ENCODE measurements at regions of chr6 and their contacts with region 1.

Region 1: DNA sequence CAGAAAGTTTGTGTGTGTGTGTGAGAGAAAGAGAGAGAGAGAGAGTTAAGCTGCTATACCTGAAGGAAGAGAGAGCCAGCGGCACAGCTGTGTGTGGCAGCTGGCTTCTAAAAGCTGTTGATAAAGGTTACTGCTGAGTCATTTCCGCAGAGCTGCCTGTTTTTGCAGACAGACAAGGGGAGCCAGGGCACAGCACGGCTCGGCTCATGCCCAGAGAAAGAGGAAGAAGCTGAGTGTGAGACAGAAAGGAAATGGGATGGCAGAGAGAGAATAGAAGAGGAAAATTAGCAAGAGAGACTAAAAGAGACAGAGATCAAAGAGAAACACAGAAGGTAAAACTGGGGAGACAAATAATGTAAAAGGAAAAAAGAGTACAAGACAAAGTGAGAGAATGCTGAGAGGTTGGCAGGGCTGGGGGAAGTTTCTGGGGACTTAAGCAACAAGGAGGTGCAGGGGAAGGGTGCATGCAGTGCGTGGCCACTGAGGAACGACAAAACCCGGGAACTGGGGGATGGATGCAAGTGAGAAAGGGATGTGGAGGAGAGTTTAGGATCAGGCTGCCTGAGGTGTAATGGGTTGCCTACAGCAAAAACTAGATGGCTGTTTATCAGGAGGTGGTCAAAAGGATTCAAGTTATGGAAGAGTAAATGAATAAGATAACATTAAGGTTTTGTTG is 22.7 kb downstream of the HLA-A start:
- DNase-seq: peak; percentile 88
- H3K4me3 ChIP-seq: peak overlapping the region in 3 of 4 donors; percentile 31 to 54 (median 36)
- H3K27ac ChIP-seq: peak overlapping the region; percentile 88 to 94 (median 92)
- H3K4me1 ChIP-seq: peaks cover 18 to 46% (median 33%) of the 10 kb centered on the region in 4 donors
- H3K27me3 ChIP-seq: no peaks in the 10 kb centered on the region
- CTCF ChIP-seq: no peak
- EP300 ChIP-seq: no peak
- POLR2A ChIP-seq: peak; percentile 85

Region 2: DNA sequence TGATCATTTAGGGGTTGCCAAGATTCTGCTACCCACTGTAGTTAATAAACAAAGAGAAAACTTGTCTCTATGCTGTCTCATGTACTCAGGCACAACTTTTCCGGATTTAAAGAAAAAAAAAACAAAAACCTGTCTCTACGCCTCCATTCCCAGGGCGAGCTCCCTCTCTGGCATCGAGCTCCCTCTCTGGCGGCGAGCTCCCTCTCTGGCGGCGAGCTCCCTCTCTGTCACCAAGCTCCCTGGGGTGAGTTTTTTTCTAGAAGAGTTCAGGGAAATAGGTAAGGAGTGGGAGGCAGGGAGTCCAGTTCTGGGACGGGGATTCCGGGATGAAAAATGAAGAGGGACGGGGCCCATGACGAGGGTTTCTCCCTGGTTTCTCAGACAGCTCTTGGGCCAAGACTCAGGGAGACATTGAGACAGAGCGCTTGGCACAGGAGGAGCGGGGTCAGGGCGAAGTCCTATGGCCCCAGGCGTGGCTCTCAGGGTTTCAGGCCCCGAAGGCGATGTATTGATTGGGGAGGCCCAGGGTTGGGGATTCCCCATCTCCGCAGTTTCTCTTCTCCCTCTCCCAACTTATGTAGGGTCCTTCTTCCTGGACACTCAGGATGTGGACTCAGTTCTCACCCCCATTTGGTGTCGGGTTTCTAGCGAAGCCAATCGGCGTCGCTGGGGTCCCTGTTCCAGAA is 39.2 kb before region 1 on chr6:
- in situ Hi-C with region 1: no loop called
- intact Hi-C with region 1: loop called (anchors 2 kb)
- DNase-seq: no peak
- H3K4me3 ChIP-seq: peak overlapping the region in 3 of 4 donors; percentile 59 to 71 (median 66)
- H3K27ac ChIP-seq: peak overlapping the region in 3 of 4 donors; percentile 82 to 98 (median 90)
- H3K4me1 ChIP-seq: peaks cover 0 to 7% (median 0%) of the 10 kb centered on the region in 4 donors
- H3K27me3 ChIP-seq: no peaks in the 10 kb centered on the region
- CTCF ChIP-seq: no peak
- EP300 ChIP-seq: no peak
- POLR2A ChIP-seq: no peak

Region 3: DNA sequence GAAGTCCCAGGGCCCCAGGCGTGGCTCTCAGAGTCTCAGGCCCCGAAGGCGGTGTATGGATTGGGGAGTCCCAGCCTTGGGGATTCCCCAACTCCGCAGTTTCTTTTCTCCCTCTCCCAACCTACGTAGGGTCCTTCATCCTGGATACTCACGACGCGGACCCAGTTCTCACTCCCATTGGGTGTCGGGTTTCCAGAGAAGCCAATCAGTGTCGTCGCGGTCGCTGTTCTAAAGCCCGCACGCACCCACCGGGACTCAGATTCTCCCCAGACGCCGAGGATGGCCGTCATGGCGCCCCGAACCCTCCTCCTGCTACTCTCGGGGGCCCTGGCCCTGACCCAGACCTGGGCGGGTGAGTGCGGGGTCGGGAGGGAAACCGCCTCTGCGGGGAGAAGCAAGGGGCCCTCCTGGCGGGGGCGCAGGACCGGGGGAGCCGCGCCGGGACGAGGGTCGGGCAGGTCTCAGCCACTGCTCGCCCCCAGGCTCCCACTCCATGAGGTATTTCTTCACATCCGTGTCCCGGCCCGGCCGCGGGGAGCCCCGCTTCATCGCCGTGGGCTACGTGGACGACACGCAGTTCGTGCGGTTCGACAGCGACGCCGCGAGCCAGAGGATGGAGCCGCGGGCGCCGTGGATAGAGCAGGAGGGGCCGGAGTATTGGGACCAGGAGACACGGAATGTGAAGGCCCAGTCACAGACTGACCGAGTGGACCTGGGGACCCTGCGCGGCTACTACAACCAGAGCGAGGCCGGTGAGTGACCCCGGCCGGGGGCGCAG is 22.6 kb before region 1 on chr6 and contains the start of gene HLA-A:
- in situ Hi-C with region 1: no loop called
- intact Hi-C with region 1: loop called (anchors 2 kb)
- DNase-seq: peak; percentile 96
- H3K4me3 ChIP-seq: peak within 1 kb of the TSS; percentile 46 to 79 (median 72)
- H3K27ac ChIP-seq: peak within 1 kb of the TSS; percentile 83 to 95 (median 94)
- H3K4me1 ChIP-seq: peaks cover 0 to 25% (median 5%) of the 10 kb centered on the region in 4 donors
- H3K27me3 ChIP-seq: no peaks in the 10 kb centered on the region
- CTCF ChIP-seq: peak in 1 of 5 experiments; percentile 9
- EP300 ChIP-seq: no peak
- POLR2A ChIP-seq: peak; percentile 96
- total RNA-seq, gene HLA-A: 733 to 1,932 (median 1,470) TPM

Measured in transverse colon (tissue), 4 donors.